ENCODE measurements at regions of chr19 and their contacts with region 1.

Region 1: DNA sequence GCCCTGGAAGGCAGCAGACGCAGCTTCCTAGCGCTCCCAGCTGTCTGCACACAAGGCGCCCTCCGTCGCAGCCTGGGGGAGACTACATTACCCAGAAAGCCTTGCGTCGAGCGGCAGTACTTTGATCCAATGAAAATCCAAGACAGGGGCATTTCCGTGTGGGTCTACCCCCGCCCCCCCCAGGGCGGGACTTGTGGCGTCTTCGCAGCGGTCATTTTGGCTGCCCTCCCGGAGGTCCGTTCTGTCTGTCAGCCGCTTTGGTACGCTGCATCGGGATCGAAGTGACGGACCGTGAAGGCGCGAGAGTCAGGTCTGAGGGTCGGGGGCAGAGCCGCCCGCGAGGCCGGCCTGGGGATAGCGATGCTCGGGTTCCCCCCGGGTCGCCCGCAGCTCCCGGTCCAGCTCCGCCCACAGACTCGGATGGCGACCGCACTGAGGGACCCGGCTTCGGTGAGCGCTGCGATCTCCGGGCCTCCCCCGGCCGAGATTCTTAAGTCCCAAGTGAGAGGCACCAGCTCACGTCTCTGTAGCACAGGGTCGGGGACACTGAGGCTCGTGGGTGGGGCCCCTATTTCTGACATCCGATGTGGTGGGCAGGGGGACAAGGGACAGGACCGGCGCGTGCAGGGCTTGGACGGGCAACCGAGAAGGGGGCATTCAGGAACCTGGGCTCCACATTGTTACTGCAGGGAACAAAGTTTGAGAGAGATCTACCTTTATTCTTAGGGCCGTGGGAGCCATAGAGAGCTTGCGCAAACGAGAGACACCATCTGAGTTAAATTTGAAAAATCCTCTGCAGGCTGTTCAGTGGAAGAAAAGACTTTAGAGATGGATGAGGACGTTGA is at the start of gene ZNF211:
- DNase-seq: peak; percentile 80
- H3K4me3 Mint-ChIP-seq: peak within 1 kb of the TSS; percentile 89
- H3K27ac Mint-ChIP-seq: peak within 1 kb of the TSS; percentile 78
- H3K4me1 Mint-ChIP-seq: peaks cover 19% of the 10 kb centered on the region
- H3K27me3 Mint-ChIP-seq: no peaks in the 10 kb centered on the region
- total RNA-seq, gene ZNF211: 8.3 and 8.4 TPM in 2 replicates

Region 2: DNA sequence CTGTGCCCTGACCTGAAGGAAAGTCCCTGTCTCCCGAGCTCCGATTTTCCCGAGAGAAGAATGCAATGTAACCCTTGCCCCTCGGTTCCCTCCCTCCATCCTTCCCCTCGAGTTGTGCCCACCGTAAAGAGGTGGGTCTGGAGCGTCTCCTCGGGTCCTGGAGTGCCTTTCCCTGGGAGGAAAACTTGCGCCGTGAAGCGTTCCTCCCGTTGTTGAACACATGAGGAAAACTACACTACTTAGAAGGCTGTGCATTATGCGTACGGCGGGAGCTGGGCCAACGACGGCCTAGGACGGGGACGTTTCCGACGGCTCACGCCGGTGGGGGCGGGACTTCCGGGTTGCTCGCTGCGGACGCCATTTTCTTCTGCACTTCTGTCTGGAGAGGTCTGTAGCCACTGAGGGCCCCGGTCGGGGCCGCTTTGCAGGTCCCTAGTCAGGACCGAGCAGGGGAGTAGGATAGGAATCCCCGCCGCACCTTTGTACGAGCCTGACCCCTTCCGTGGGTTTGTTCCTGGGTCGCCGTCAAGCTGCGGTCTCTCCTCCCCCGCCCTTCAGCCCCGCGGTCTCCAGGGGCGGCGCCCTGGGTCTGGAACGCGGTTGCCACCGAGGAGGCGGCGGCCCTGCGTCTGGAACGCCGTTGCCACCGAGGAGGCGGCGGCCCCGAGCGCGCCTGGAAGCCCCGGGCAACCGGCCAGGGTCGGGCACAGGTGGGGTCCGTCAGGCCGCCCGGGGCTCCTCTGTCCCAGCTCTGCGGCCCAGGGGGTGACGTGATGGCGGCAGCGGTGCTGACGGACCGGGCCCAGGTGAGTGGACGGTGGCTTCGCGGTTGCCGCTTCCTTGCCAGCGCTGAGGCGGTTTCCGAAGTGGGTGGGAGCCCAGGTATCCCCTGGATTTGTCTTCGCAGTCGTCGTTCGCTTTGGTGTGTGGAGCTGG is 441.8 kb before region 1 on chr19 and contains the start of gene ZNF264:
- intact Hi-C with region 1: loop called (anchors 5 kb)
- DNase-seq: peak; percentile 86
- H3K4me3 Mint-ChIP-seq: peak within 1 kb of the TSS; percentile 94
- H3K27ac Mint-ChIP-seq: peak within 1 kb of the TSS; percentile 85
- H3K4me1 Mint-ChIP-seq: peaks cover 24% of the 10 kb centered on the region
- H3K27me3 Mint-ChIP-seq: no peaks in the 10 kb centered on the region
- total RNA-seq, gene ZNF264: 16.1 and 18.3 TPM in 2 replicates

Region 3: GRCh38 chr19:57559404-57560025 is 73.7 kb before region 1 on chr19 and contains the start of gene ZNF550:
- intact Hi-C with region 1: loop called (anchors 1 kb)
- DNase-seq: peak; percentile 84
- H3K4me3 Mint-ChIP-seq: peak within 1 kb of the TSS; percentile 98
- H3K27ac Mint-ChIP-seq: peak within 1 kb of the TSS; percentile 88
- H3K4me1 Mint-ChIP-seq: peaks cover 28% of the 10 kb centered on the region
- H3K27me3 Mint-ChIP-seq: no peaks in the 10 kb centered on the region
- total RNA-seq, gene ZNF550: 7.2 and 7.5 TPM in 2 replicates

Region 4: GRCh38 chr19:57599761-57600383 is 33.3 kb before region 1 on chr19 and contains the start of gene ZNF530:
- intact Hi-C with region 1: loop called (anchors 1 kb)
- DNase-seq: peak; percentile 78
- H3K4me3 Mint-ChIP-seq: peak within 1 kb of the TSS; percentile 85
- H3K27ac Mint-ChIP-seq: peak within 1 kb of the TSS; percentile 58
- H3K4me1 Mint-ChIP-seq: peaks cover 16% of the 10 kb centered on the region
- H3K27me3 Mint-ChIP-seq: no peaks in the 10 kb centered on the region
- total RNA-seq, gene ZNF530: 5.4 and 7.3 TPM in 2 replicates

Region 5: GRCh38 chr19:57613941-57614743 is 19.1 kb before region 1 on chr19 and contains the start of gene ZNF134:
- intact Hi-C with region 1: loop called (anchors 1 kb)
- DNase-seq: peak; percentile 84
- H3K4me3 Mint-ChIP-seq: peak within 1 kb of the TSS; percentile 90
- H3K27ac Mint-ChIP-seq: peak within 1 kb of the TSS; percentile 78
- H3K4me1 Mint-ChIP-seq: peaks cover 11% of the 10 kb centered on the region
- H3K27me3 Mint-ChIP-seq: no peaks in the 10 kb centered on the region
- total RNA-seq, gene ZNF134: 8.4 and 9.4 TPM in 2 replicates

Region 6: DNA sequence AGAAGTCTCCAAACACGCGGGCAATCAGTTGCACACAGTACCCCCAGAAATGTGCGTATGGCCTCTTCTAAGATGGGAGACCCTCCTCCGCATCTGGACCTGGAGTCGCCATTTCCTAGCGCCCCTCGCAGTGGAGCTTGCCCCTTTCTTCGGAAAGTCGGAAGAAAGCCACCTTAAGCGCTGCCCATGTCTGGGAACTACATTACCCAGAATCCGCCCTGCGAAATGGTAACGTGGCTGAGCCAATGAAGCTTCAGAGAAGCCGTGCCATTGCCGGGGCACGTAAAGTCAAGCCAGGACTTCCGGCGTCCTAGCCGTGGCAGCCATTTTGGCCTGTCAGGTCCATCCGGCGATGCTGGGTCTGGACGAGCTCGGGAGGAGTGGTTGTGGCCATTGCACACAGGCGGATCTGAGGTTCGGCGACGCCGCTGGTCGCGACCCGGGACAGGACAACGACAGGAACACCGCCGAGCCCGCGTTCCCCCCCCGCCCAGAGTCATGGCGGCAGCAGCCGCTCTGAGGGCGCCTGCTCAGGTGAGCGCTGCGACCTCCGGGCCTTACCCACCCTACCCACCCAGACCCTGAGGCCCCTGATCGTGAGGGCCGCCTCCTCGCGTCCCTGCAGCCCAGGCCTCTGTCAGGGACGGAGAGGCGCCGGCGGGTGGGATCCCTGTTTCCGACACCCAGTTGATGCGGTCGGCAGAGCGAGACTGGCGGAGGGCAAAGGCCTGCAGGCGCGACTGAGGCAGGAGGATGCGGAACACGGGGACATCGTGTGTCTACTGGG is 136.3 kb after region 1 on chr19 and contains the start of gene ZNF586:
- intact Hi-C with region 1: loop called (anchors 1 kb)
- DNase-seq: peak; percentile 85
- H3K4me3 Mint-ChIP-seq: peak within 1 kb of the TSS; percentile 94
- H3K27ac Mint-ChIP-seq: peak within 1 kb of the TSS; percentile 89
- H3K4me1 Mint-ChIP-seq: peaks cover 24% of the 10 kb centered on the region
- H3K27me3 Mint-ChIP-seq: no peaks in the 10 kb centered on the region
- total RNA-seq, gene ZNF586: 13.6 and 13.8 TPM in 2 replicates

Region 7: GRCh38 chr19:58154679-58155648 is 521.8 kb after region 1 on chr19:
- intact Hi-C with region 1: loop called (anchors 1 kb)
- DNase-seq: peak; percentile 89
- H3K4me3 Mint-ChIP-seq: peak overlapping the region; percentile 76
- H3K27ac Mint-ChIP-seq: peak overlapping the region; percentile 55
- H3K4me1 Mint-ChIP-seq: peaks cover 4% of the 10 kb centered on the region
- H3K27me3 Mint-ChIP-seq: no peaks in the 10 kb centered on the region

Measured in activated T-helper 1 cell treated with anti-CD3 and anti-CD28 coated beads, Interleukin-12 subunit alpha, Interleukin-12 subunit beta, Interleukin-2, Interleukin-4 antibody, amounts not matched to agents 30 ng/mL and 10 ng/mL and 1 ng/mL, durations not matched to agents 14 hours and 24 hours and 36 hours (primary cell).